Ascending aorta (tissue), 2 donors: ENCODE measurements at regions of chr19 and their contacts with region 1.

Region 1: GRCh38 chr19:38387550-38388348 is at the start of gene GGN:
- DNase-seq: peak; percentile 75 to 95
- H3K4me3 ChIP-seq: peak within 1 kb of the TSS; percentile 58 to 94
- H3K27ac ChIP-seq: peak within 1 kb of the TSS; percentile 91 to 97
- H3K4me1 ChIP-seq: peaks cover 6 to 20% of the 10 kb centered on the region in 2 donors
- H3K27me3 ChIP-seq: no peaks in the 10 kb centered on the region
- CTCF ChIP-seq: no peak
- total RNA-seq, gene GGN: 46.9 TPM

Region 2: GRCh38 chr19:38004521-38005223 is 383.1 kb before region 1 on chr19:
- intact Hi-C with region 1: loop called (anchors 10 kb)
- DNase-seq: peak; percentile 77 to 92
- H3K4me3 ChIP-seq: peak overlapping the region; percentile 54 to 62
- H3K27ac ChIP-seq: peak overlapping the region; percentile 81 to 83
- H3K4me1 ChIP-seq: peaks cover 0 to 18% of the 10 kb centered on the region in 2 donors
- H3K27me3 ChIP-seq: no peaks in the 10 kb centered on the region
- CTCF ChIP-seq: no peak

Region 3: GRCh38 chr19:38374429-38375176 is 13.1 kb before region 1 on chr19 and contains the start of gene PSMD8:
- intact Hi-C with region 1: loop called (anchors 1 kb)
- DNase-seq: peak; percentile 98 to 100
- H3K4me3 ChIP-seq: peak within 1 kb of the TSS; percentile 75 to 79
- H3K27ac ChIP-seq: peak within 1 kb of the TSS; percentile 84
- H3K4me1 ChIP-seq: peaks cover 9 to 14% of the 10 kb centered on the region in 2 donors
- H3K27me3 ChIP-seq: no peaks in the 10 kb centered on the region
- CTCF ChIP-seq: peak in 2 of 3 experiments; percentile 8 to 25
- total RNA-seq, gene PSMD8: 235 TPM

Region 4: DNA sequence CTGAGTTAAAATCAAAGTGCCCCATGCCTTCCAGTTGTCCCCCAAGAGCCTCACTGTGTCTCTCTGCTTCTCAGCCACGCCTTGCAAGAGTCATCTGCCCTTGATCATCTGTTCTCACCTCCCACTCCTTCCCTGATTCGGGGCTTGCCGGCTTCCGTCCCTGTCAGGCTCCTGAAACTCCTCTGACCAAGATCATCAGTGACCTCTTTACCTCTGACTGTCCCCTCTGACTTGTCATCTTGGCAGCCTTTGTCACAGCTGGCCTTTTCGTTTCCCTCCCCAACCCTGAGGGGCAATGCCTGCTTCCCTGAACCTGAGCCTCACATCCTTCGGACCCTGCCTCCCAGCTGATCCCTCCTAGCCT is 163.7 kb after region 1 on chr19:
- intact Hi-C with region 1: no loop called
- DNase-seq: no peak
- H3K4me3 ChIP-seq: no peak overlapping the region
- H3K27ac ChIP-seq: no peak overlapping the region
- H3K4me1 ChIP-seq: no peaks in the 10 kb centered on the region
- H3K27me3 ChIP-seq: no peaks in the 10 kb centered on the region
- CTCF ChIP-seq: no peak

Region 5: GRCh38 chr19:38618590-38619360 is 231.0 kb after region 1 on chr19 and contains the start of gene EIF3K:
- intact Hi-C with region 1: loop called (anchors 5 kb)
- DNase-seq: peak; percentile 97 to 99
- H3K4me3 ChIP-seq: peak within 1 kb of the TSS; percentile 75 to 91
- H3K27ac ChIP-seq: peak within 1 kb of the TSS; percentile 87 to 88
- H3K4me1 ChIP-seq: peaks cover 9 to 10% of the 10 kb centered on the region in 2 donors
- H3K27me3 ChIP-seq: no peaks in the 10 kb centered on the region
- CTCF ChIP-seq: no peak
- total RNA-seq, gene EIF3K: 696 TPM